Activated B cell treated with CpG ODN at 0.5 μM for 24 hours (primary cell): ENCODE measurements at regions of chr2 and their contacts with region 1.

Region 1: GRCh38 chr2:159712143-159712928 is at the start of gene MARCHF7:
- DNase-seq: peak; percentile 97
- ATAC-seq: peak; percentile 93
- H3K4me3 Mint-ChIP-seq: peak within 1 kb of the TSS; percentile 99
- H3K27ac Mint-ChIP-seq: peak within 1 kb of the TSS; percentile 99
- H3K4me1 Mint-ChIP-seq: peaks cover 56% of the 10 kb centered on the region
- H3K27me3 Mint-ChIP-seq: no peaks in the 10 kb centered on the region
- CTCF ChIP-seq: no peak
- total RNA-seq, gene MARCHF7: 86.7 and 89.5 TPM in 2 replicates

Region 2: GRCh38 chr2:158456309-158457066 is 1255.8 kb before region 1 on chr2 and contains the starts of genes CCDC148 and PKP4:
- CTCF ChIA-PET with region 1: no interaction called
- POLR2A ChIA-PET with region 1: no interaction called
- intact Hi-C with region 1: loop called (anchors 2 kb)
- DNase-seq: peak; percentile 76
- ATAC-seq: peak; percentile 96
- H3K4me3 Mint-ChIP-seq: peak within 1 kb of the TSS; percentile 92
- H3K27ac Mint-ChIP-seq: peak within 1 kb of the TSS; percentile 47
- H3K4me1 Mint-ChIP-seq: peaks cover 18% of the 10 kb centered on the region
- H3K27me3 Mint-ChIP-seq: peaks cover 18% of the 10 kb centered on the region
- CTCF ChIP-seq: no peak
- total RNA-seq, gene CCDC148: not detected in 2 replicates
- total RNA-seq, gene PKP4: 6.5 and 8.2 TPM in 2 replicates

Region 3: GRCh38 chr2:158968396-158969161 is 743.8 kb before region 1 on chr2 and contains the start of gene TANC1:
- CTCF ChIA-PET with region 1: no interaction called
- POLR2A ChIA-PET with region 1: no interaction called
- intact Hi-C with region 1: loop called (anchors 10 kb)
- DNase-seq: peak; percentile 31
- ATAC-seq: peak; percentile 83
- H3K4me3 Mint-ChIP-seq: peak within 1 kb of the TSS; percentile 70
- H3K27ac Mint-ChIP-seq: no peak within 1 kb of the TSS
- H3K4me1 Mint-ChIP-seq: peaks cover 18% of the 10 kb centered on the region
- H3K27me3 Mint-ChIP-seq: peaks cover 57% of the 10 kb centered on the region
- CTCF ChIP-seq: no peak
- total RNA-seq, gene TANC1: 0.02 TPM in 1 of 2 replicates, not detected in the other

Region 4: GRCh38 chr2:159505196-159505595 is 207.1 kb before region 1 on chr2:
- CTCF ChIA-PET with region 1: no interaction called
- POLR2A ChIA-PET with region 1: no interaction called
- intact Hi-C with region 1: no loop called
- DNase-seq: no peak
- ATAC-seq: no peak
- H3K4me3 Mint-ChIP-seq: no peak overlapping the region
- H3K27ac Mint-ChIP-seq: no peak overlapping the region
- H3K4me1 Mint-ChIP-seq: peaks cover 5% of the 10 kb centered on the region
- H3K27me3 Mint-ChIP-seq: no peaks in the 10 kb centered on the region
- CTCF ChIP-seq: no peak

Region 5: GRCh38 chr2:159516241-159516766 is 196.0 kb before region 1 on chr2:
- CTCF ChIA-PET with region 1: no interaction called
- POLR2A ChIA-PET with region 1: interaction called, 25 read pairs
- intact Hi-C with region 1: loop called (anchors 1 kb)
- DNase-seq: no peak
- ATAC-seq: peak; percentile 89
- H3K4me3 Mint-ChIP-seq: peak overlapping the region; percentile 85
- H3K27ac Mint-ChIP-seq: peak overlapping the region; percentile 87
- H3K4me1 Mint-ChIP-seq: peaks cover 31% of the 10 kb centered on the region
- H3K27me3 Mint-ChIP-seq: no peaks in the 10 kb centered on the region
- CTCF ChIP-seq: no peak

Region 6: DNA sequence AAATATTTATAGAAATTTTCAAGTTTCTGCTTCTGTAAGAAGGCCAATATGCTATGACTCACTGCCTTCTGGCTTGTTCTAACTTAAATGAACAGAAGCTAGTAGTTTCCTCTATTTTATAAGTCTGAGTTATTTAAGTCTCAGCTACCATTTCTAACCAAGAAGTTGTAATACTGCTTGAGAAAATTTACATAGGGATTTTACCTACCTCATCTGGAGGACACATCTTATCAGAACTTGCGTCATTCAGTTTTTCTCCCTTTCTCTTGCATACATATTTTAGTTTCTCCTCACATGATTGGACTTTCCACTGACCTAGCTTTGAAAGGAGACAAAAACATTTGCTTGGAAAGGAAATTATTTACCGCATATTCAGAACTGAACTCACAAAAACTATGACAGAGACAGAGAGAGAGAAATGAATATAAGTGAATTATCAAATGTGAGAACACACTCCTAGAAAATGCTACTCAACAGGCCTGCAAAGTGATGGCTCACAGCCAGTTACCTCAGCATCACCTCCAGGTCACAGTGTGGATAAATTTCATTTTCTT is 166.8 kb after region 1 on chr2:
- CTCF ChIA-PET with region 1: no interaction called
- POLR2A ChIA-PET with region 1: interaction called, 3 read pairs
- intact Hi-C with region 1: loop called (anchors 1 kb)
- DNase-seq: no peak
- ATAC-seq: peak; percentile 88
- H3K4me3 Mint-ChIP-seq: peak overlapping the region; percentile 46
- H3K27ac Mint-ChIP-seq: peak overlapping the region; percentile 91
- H3K4me1 Mint-ChIP-seq: peaks cover 45% of the 10 kb centered on the region
- H3K27me3 Mint-ChIP-seq: no peaks in the 10 kb centered on the region
- CTCF ChIP-seq: no peak

Region 7: DNA sequence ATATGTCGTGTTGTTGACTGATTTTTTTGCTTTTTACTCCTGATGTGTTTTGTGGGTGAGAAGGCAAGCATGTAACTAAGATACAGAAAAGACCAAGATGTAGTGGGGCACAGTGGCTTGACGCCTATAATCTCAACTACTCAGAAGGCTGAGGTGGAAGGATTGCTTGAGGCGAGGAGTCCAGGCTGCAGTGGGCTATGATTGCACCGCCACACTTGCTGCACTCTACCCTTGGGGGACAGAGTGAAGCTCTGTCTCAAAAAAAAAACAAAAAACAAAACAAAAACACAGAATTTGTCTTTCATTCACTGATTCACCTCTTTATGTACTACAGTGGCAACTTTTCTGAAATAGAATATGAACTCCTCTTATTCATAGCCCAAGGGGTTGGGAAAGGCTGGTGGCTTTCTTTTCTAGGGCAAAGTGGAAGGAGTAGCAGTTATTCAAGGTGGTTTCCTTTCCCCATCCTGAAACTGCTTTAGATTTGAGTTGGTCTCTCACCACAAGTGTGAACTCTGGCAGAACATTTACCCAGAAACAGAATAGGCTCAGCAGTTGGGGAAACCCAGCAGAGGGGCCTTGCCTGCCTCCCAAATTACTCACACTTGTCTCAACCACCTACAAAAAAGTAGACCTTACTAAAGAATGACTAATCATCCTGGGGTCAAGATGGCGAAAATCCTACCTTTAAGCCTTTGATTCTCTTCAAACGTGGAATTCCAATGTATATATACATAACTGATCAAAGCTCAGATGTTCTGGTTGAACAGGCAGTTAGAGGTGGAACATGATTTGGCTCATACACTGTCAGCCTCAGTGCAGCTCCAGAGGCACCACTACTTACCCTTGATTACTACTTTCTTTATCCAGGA is 1454.4 kb after region 1 on chr2:
- CTCF ChIA-PET with region 1: no interaction called
- POLR2A ChIA-PET with region 1: no interaction called
- intact Hi-C with region 1: loop called (anchors 1 kb)
- DNase-seq: no peak
- ATAC-seq: peak; percentile 65
- H3K4me3 Mint-ChIP-seq: peak overlapping the region; percentile 64
- H3K27ac Mint-ChIP-seq: peak overlapping the region; percentile 94
- H3K4me1 Mint-ChIP-seq: peaks cover 93% of the 10 kb centered on the region
- H3K27me3 Mint-ChIP-seq: no peaks in the 10 kb centered on the region
- CTCF ChIP-seq: no peak